ENCODE measurements at regions of chr9 and their contacts with region 1.

Region 1: GRCh38 chr9:72038890-72039410 is 21.5 kb downstream of the C9orf57 start:
- DNase-seq: peak; percentile 71
- H3K4me3 ChIP-seq: no peak overlapping the region
- H3K27ac ChIP-seq: no peak overlapping the region
- H3K4me1 ChIP-seq: no peaks in the 10 kb centered on the region
- H3K27me3 ChIP-seq: no peaks in the 10 kb centered on the region
- CTCF ChIP-seq: peak; percentile 96

Region 2: GRCh38 chr9:71984403-71984802 is 54.5 kb before region 1 on chr9:
- CTCF ChIA-PET with region 1: no interaction called
- dilution Hi-C with region 1: no loop called
- in situ Hi-C with region 1: no loop called
- intact Hi-C with region 1: no loop called
- DNase-seq: peak; percentile 38
- H3K4me3 ChIP-seq: no peak overlapping the region
- H3K27ac ChIP-seq: no peak overlapping the region
- H3K4me1 ChIP-seq: no peaks in the 10 kb centered on the region
- H3K27me3 ChIP-seq: no peaks in the 10 kb centered on the region
- CTCF ChIP-seq: no peak

Region 3: DNA sequence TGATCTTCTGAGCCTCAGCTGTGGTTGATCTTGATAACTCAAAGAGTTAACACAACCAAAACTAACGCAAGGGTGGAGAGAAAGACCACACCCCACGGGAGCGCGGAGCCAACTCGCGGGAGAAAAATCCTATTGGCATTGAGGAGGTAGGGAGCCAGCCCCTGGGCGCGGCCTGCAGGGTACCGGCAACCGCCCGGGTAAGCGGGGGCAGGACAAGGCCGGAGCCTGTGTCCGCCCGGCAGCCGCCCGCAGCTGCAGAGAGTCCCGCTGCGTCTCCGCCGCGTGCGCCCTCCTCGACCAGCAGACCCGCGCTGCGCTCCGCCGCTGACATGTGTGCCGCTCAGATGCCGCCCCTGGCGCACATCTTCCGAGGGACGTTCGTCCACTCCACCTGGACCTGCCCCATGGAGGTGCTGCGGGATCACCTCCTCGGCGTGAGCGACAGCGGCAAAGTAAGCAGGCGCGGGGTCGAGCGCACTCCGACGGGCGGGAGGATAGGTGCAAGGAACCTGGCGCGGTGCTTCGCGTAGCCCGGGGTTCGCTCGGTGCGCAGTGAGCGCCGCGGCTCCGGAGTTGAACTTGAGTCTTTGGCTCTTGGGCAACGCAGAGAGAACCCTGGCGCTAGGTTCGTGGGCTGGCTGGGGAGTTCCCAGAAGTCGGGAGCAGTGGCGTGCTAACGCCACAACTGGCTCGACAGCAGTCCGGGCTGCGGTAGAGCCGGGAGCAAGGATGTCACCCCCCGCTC is 110.5 kb after region 1 on chr9 and contains the start of gene GDA:
- CTCF ChIA-PET with region 1: no interaction called
- dilution Hi-C with region 1: no loop called
- in situ Hi-C with region 1: no loop called
- intact Hi-C with region 1: loop called (anchors 5 kb)
- DNase-seq: peak; percentile 30
- H3K4me3 ChIP-seq: peak within 1 kb of the TSS in 2 of 3 experiments; percentile 48 to 49
- H3K27ac ChIP-seq: no peak within 1 kb of the TSS
- H3K4me1 ChIP-seq: peaks cover 15% of the 10 kb centered on the region
- H3K27me3 ChIP-seq: no peaks in the 10 kb centered on the region
- CTCF ChIP-seq: no peak
- total RNA-seq, gene GDA: not detected

Region 4: GRCh38 chr9:72203205-72203803 is 164.4 kb after region 1 on chr9:
- CTCF ChIA-PET with region 1: no interaction called
- dilution Hi-C with region 1: no loop called
- in situ Hi-C with region 1: no loop called
- intact Hi-C with region 1: loop called (anchors 1 kb)
- DNase-seq: peak; percentile 40
- H3K4me3 ChIP-seq: no peak overlapping the region
- H3K27ac ChIP-seq: no peak overlapping the region
- H3K4me1 ChIP-seq: no peaks in the 10 kb centered on the region
- H3K27me3 ChIP-seq: peaks cover 5% of the 10 kb centered on the region
- CTCF ChIP-seq: peak; percentile 61 to 86

Region 5: DNA sequence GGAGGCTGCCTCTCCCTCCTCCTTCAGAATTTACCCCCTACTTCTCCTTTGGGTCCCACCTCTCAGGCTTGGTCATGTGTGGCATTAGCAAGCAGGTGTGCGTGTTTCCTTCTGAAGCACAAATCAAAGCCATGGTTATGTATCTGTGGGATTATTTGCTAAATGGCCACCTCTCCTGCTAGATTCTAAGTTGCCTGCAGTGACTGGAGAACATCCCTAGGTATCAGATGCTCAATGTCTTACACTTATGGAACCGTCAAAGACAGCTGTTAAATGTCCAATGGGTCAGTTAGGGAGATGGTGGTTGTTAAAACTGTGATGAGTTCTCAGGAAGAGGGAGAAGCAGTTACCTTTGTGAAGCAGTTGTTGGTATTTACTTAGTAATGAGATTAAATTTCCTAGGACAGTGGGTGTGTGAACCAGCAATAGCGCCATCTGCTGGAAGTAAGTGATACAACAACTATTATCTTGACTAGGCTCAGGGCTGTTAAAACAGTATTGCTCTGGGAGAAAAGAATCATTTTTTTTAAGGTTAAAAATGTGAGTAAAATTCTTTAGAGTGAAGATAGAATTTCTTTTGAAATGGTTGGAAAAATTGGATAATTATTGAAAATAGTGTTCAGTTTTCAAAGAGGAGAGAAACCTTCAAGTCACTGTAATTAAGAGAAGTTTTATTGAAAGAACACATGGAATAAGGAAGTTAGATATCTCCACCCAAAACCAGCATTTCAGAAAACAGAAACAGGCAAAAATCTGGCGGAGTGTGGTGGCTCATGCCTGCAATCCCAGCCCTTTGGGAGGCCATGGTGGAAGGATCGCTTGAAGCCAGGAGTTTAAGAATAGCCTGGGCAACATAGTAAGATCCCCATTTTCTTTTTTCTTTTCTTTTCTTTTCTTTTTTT is 553.8 kb after region 1 on chr9:
- CTCF ChIA-PET with region 1: no interaction called
- dilution Hi-C with region 1: loop called (anchors 10 kb)
- in situ Hi-C with region 1: loop called in 1 of 2 experiments (anchors 25 kb)
- intact Hi-C with region 1: loop called (anchors 2 kb)
- DNase-seq: peak; percentile 46
- H3K4me3 ChIP-seq: no peak overlapping the region
- H3K27ac ChIP-seq: no peak overlapping the region
- H3K4me1 ChIP-seq: no peaks in the 10 kb centered on the region
- H3K27me3 ChIP-seq: no peaks in the 10 kb centered on the region
- CTCF ChIP-seq: peak; percentile 66 to 72

Region 6: GRCh38 chr9:72827950-72828731 is 789.2 kb after region 1 on chr9:
- CTCF ChIA-PET with region 1: interaction called, 6 read pairs
- dilution Hi-C with region 1: no loop called
- in situ Hi-C with region 1: loop called in 1 of 2 experiments (anchors 10 kb)
- intact Hi-C with region 1: no loop called
- DNase-seq: peak; percentile 90
- H3K4me3 ChIP-seq: no peak overlapping the region
- H3K27ac ChIP-seq: peak overlapping the region; percentile 72
- H3K4me1 ChIP-seq: peaks cover 16% of the 10 kb centered on the region
- H3K27me3 ChIP-seq: no peaks in the 10 kb centered on the region
- CTCF ChIP-seq: no peak